Activated CD4-positive, alpha-beta T cell treated with anti-CD3 and anti-CD28 coated beads for 36 hours (primary cell): ENCODE measurements at regions of chrX and their contacts with region 1.

Region 1: GRCh38 chrX:19334945-19335626 is 8.6 kb upstream of the PDHA1 start:
- DNase-seq: peak; percentile 38
- ATAC-seq: peak; percentile 53
- H3K4me3 Mint-ChIP-seq: no peak overlapping the region
- H3K27ac Mint-ChIP-seq: no peak overlapping the region
- H3K4me1 Mint-ChIP-seq: no peaks in the 10 kb centered on the region
- H3K27me3 Mint-ChIP-seq: no peaks in the 10 kb centered on the region

Region 2: GRCh38 chrX:18279009-18279408 is 1056.1 kb before region 1 on chrX:
- CTCF ChIA-PET with region 1: no interaction called
- POLR2A ChIA-PET with region 1: no interaction called
- intact Hi-C with region 1: no loop called
- DNase-seq: no peak
- ATAC-seq: no peak
- H3K4me3 Mint-ChIP-seq: no peak overlapping the region
- H3K27ac Mint-ChIP-seq: no peak overlapping the region
- H3K4me1 Mint-ChIP-seq: no peaks in the 10 kb centered on the region
- H3K27me3 Mint-ChIP-seq: no peaks in the 10 kb centered on the region

Region 3: DNA sequence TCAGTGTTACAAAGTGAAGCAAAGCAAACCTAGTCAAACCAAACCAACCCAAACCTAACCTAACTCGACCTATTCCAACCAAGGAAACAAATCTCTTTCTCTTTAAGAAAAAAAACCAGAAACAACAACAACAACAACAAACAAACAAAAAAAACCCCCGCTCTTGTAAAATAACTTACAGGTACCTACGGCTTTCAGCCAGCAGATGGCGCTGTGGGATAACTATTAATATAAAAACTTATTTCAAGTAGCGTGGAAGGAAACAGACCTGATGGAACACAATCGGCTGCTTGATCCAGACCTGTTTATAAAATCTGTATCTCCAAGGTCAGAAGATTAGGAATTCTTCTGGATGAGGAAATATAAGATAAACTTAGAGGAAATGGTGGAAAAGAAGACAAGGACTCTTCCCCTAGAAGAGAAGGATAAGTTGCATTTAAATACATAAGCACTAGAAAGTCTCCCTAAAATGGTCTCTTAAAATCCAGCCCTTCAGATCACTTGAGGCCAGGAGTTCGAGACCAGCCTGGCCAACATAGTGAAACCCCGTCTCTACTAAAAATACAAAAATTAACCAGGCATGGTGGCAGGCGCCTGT is 944.0 kb before region 1 on chrX:
- CTCF ChIA-PET with region 1: interaction called, 5 read pairs
- POLR2A ChIA-PET with region 1: no interaction called
- intact Hi-C with region 1: loop called (anchors 1 kb)
- DNase-seq: peak; percentile 71
- ATAC-seq: no peak
- H3K4me3 Mint-ChIP-seq: no peak overlapping the region
- H3K27ac Mint-ChIP-seq: no peak overlapping the region
- H3K4me1 Mint-ChIP-seq: no peaks in the 10 kb centered on the region
- H3K27me3 Mint-ChIP-seq: no peaks in the 10 kb centered on the region

Region 4: DNA sequence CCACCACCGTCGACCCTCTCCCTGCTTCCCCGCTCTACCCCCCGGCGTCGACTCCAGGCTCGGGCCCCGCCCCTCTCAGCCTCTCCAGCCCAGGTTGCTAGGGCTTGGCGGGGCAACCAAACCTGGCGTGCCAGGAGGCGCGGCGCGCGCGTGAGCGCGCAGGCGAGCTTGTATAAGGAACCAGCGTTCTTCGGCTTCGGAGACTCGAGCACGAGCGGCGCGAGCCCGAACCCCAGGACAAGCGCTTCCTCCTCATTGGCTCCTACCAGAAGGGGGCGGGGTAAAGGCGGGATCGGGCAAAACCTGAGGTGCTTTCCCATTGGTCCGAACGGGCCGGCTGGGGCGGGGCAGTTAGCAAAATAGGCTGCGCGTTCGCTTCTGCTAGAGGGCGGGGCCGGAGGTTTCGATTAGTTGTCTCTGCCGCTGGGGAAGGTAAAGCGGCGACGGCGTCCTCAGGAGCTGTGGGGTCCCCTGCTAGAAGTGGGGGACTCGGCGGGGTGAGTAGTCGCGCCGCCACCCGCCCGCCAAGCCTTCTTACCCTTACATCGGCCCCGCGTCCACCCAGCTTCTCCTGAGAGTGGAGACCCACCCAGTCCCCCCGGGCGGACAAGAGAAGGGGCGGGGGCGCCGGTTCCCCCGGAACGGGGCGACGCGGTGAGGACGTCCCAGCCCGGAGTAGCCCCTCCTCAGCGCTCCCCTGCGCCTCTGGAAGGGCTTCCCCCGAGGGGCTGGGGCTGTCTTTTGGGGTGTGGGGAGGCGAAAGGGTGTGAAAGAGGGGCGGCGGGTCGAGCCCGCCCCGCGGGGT is 909.7 kb before region 1 on chrX and contains the start of gene CDKL5:
- CTCF ChIA-PET with region 1: no interaction called
- POLR2A ChIA-PET with region 1: no interaction called
- intact Hi-C with region 1: loop called (anchors 1 kb)
- DNase-seq: peak; percentile 97
- ATAC-seq: peak; percentile 96
- H3K4me3 Mint-ChIP-seq: peak within 1 kb of the TSS; percentile 79
- H3K27ac Mint-ChIP-seq: peak within 1 kb of the TSS; percentile 60
- H3K4me1 Mint-ChIP-seq: peaks cover 2% of the 10 kb centered on the region
- H3K27me3 Mint-ChIP-seq: peaks cover 2% of the 10 kb centered on the region
- total RNA-seq, gene CDKL5: 1.2 to 1.5 TPM

Region 5: DNA sequence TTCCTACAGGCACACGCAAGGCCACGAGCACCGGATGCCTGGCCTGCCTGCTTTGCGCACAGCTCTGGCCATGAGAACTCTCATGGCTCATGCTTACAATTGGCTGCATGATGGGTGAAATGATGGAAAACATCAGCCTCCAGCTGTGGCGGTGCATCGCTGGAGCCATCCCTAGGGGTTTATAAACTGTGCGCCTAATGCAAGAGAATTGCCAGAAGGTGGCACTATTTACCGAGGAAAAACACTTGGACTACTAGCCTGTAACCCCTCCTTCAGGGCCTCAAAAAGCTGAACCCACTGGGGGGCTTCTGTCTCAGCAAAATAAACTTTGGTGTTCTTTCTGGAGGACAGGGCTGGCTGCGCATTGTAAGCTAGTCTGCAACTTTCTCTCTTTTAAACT is 403.1 kb before region 1 on chrX:
- CTCF ChIA-PET with region 1: no interaction called
- POLR2A ChIA-PET with region 1: no interaction called
- intact Hi-C with region 1: loop called in 1 of 2 experiments (anchors 1 kb)
- DNase-seq: peak; percentile 6
- ATAC-seq: peak; percentile 33
- H3K4me3 Mint-ChIP-seq: no peak overlapping the region
- H3K27ac Mint-ChIP-seq: no peak overlapping the region
- H3K4me1 Mint-ChIP-seq: no peaks in the 10 kb centered on the region
- H3K27me3 Mint-ChIP-seq: no peaks in the 10 kb centered on the region

Region 6: GRCh38 chrX:19040373-19040772 is 294.7 kb before region 1 on chrX:
- CTCF ChIA-PET with region 1: interaction called, 28 read pairs
- POLR2A ChIA-PET with region 1: no interaction called
- intact Hi-C with region 1: loop called (anchors 2 to 5 kb)
- DNase-seq: no peak
- ATAC-seq: no peak
- H3K4me3 Mint-ChIP-seq: no peak overlapping the region
- H3K27ac Mint-ChIP-seq: no peak overlapping the region
- H3K4me1 Mint-ChIP-seq: no peaks in the 10 kb centered on the region
- H3K27me3 Mint-ChIP-seq: no peaks in the 10 kb centered on the region

Region 7: GRCh38 chrX:19194285-19195242 is 140.5 kb before region 1 on chrX:
- CTCF ChIA-PET with region 1: no interaction called
- POLR2A ChIA-PET with region 1: no interaction called
- intact Hi-C with region 1: loop called in 1 of 2 experiments (anchors 1 kb)
- DNase-seq: no peak
- ATAC-seq: no peak
- H3K4me3 Mint-ChIP-seq: no peak overlapping the region
- H3K27ac Mint-ChIP-seq: no peak overlapping the region
- H3K4me1 Mint-ChIP-seq: no peaks in the 10 kb centered on the region
- H3K27me3 Mint-ChIP-seq: peaks cover 5% of the 10 kb centered on the region

Region 8: DNA sequence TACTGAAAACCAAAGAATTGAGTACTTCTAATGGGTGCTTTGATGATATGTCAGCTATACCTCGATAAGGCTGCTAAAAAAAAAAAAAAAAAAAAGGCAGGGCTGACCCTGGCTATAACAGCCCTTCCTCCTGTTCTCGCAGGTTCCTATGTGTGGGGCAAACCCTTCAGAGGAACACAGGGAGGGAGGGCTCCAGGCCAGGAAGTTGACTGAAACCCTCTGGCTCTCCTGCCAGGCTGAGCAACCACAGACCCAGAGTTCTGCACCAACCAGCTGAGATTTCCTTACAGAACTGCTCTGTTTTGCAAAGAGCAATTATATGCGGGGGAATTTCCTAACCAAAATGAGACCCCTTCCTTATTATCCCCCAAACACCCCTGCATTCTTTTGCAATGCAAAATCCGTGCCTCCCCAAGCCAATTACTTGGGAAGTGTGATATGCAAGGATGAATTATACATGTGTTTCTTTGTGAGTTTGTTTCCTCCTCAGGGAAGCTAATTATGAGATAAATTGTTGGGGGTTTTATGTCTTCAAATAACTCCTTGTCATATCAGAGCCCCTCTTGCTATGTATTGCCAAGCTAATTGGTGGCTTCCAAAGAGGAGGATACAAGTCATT is 54.2 kb after region 1 on chrX:
- CTCF ChIA-PET with region 1: no interaction called
- POLR2A ChIA-PET with region 1: no interaction called
- intact Hi-C with region 1: no loop called
- DNase-seq: no peak
- ATAC-seq: no peak
- H3K4me3 Mint-ChIP-seq: no peak overlapping the region
- H3K27ac Mint-ChIP-seq: no peak overlapping the region
- H3K4me1 Mint-ChIP-seq: no peaks in the 10 kb centered on the region
- H3K27me3 Mint-ChIP-seq: no peaks in the 10 kb centered on the region

Region 9: GRCh38 chrX:19462231-19462630 is 127.1 kb after region 1 on chrX:
- CTCF ChIA-PET with region 1: no interaction called
- POLR2A ChIA-PET with region 1: no interaction called
- intact Hi-C with region 1: no loop called
- DNase-seq: no peak
- ATAC-seq: no peak
- H3K4me3 Mint-ChIP-seq: no peak overlapping the region
- H3K27ac Mint-ChIP-seq: no peak overlapping the region
- H3K4me1 Mint-ChIP-seq: peaks cover 2% of the 10 kb centered on the region
- H3K27me3 Mint-ChIP-seq: peaks cover 5% of the 10 kb centered on the region